ENCODE measurements at regions of chr19 and their contacts with region 1.

Region 1: DNA sequence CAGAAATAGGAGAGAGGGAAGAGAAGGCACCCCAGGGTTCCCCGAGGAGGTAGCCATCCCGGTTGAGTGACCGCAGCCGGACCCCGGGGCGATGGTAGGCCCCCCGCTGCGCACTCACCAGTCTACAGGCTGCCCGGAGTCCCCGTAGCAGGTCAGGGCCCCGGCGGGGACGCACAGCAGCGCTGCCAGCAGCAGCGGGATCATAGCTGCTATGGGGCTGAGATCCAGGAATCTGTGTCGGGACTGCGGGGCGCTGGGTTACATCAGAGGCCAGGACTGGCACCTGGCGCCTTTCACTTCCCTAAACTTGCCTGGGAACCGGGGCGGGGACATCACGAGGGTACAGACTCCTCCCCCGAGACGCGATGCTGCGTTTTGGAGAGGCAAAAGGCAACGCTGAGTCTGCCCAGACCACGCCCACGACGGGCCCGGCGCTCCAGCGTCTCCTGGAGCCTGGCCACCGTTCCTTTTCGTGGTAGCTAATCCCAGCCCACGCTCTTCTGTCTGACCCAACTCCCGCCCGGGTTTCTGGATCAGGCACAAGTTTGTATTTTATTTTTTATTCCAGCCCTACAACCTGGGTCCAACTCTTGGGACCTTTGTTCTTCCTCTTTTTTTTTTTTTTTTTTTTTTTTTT is at the start of gene DNASE2:
- DNase-seq: peak; percentile 95
- ATAC-seq: peak; percentile 79
- H3K4me3 Mint-ChIP-seq: peak within 1 kb of the TSS; percentile 81
- H3K27ac Mint-ChIP-seq: peak within 1 kb of the TSS; percentile 87
- H3K4me1 Mint-ChIP-seq: peaks cover 33% of the 10 kb centered on the region
- H3K27me3 Mint-ChIP-seq: no peaks in the 10 kb centered on the region
- total RNA-seq, gene DNASE2: 26.1 to 27.4 TPM

Region 2: DNA sequence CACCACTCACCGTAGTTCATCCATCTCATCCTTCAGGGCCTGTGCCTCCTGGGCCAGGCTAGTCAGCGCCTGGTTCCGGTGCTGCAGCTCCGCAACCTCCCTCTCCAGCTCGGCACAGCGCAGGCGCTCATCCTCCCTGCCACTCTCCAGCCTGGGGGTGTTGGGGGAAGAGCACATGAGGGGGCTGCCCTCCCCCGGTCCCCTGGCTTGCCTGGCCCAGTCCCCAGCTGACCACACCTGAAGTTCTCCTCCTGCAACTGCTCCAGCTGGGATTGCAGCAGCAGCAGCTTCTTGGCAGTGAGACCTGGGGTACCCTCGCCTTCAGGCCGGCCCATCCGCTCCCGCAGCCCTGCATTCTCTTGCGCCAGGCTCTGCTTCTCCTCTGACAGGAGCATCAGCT is 110.4 kb before region 1 on chr19:
- CTCF ChIA-PET with region 1: no interaction called
- POLR2A ChIA-PET with region 1: no interaction called
- DNase-seq: no peak
- ATAC-seq: no peak
- H3K4me3 Mint-ChIP-seq: no peak overlapping the region
- H3K27ac Mint-ChIP-seq: no peak overlapping the region
- H3K4me1 Mint-ChIP-seq: peaks cover 24% of the 10 kb centered on the region
- H3K27me3 Mint-ChIP-seq: no peaks in the 10 kb centered on the region

Region 3: DNA sequence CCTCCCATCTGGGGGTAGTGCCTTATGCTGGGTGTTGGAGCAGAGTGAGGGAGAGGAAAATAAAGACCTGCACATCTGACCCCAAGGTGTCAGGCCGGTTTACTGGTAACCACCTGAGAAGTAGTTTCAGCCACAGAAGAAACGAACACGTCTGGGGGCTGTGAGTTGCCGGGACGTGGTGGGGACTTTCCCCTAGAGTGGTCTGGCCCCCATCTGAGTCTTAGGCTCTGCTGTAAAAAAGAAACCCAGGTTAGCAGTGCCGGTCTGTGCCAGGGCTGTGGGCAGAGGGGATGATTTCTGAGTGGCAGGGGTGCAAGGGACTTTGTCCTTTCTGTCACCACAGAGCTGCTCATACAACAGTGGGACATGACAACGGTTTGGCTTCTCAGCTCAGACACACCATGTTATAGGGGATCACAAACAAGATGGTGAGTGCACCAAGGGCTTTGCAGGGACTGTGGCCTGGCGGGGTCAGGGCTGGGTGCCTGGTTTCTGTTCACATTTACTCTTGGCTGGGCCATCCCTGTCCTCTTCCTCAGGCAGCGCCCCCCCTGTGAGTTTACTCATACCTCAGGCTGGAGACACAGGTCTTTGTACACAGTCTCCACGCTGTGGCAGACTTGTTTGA is 18.7 kb after region 1 on chr19:
- CTCF ChIA-PET with region 1: interaction called, 37 read pairs
- POLR2A ChIA-PET with region 1: interaction called, 6 read pairs
- DNase-seq: peak; percentile 41
- ATAC-seq: peak; percentile 72
- H3K4me3 Mint-ChIP-seq: no peak overlapping the region
- H3K27ac Mint-ChIP-seq: peak overlapping the region; percentile 64
- H3K4me1 Mint-ChIP-seq: peaks cover 22% of the 10 kb centered on the region
- H3K27me3 Mint-ChIP-seq: no peaks in the 10 kb centered on the region

Region 4: DNA sequence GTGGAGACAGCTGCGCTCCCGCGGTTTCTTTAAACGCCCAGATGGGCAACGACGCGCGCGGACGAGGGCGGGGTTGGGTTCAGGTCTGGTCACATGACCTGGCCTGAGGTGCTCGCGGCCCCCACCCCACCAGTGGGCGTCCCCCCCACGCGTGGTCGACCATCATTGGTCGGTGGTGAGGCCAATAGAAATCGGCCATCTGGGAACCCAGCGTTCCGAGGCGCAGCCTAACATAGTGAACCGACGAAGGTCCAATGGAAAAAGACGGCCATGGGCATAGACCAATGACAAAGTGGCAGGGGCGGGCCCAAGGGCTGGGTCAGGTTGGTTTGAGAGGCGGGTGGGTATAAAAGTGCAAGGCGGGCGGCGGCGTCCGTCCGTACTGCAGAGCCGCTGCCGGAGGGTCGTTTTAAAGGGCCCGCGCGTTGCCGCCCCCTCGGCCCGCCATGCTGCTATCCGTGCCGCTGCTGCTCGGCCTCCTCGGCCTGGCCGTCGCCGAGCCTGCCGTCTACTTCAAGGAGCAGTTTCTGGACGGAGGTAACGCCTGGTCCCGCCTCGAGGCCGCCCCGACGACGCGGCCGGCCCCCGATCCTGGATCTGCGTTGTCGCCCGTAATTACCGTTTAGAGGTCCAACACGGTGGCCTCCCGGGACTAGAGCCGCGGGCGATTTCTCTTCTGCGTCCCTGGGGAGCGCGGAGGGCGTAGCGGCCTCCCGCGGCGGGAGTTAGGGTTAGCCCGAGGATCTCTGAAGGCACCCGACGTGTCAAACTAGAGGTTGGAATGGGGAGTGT is 57.1 kb after region 1 on chr19 and contains the start of gene CALR:
- CTCF ChIA-PET with region 1: interaction called, 27 read pairs
- POLR2A ChIA-PET with region 1: interaction called, 8 read pairs
- DNase-seq: peak; percentile 100
- ATAC-seq: peak; percentile 91
- H3K4me3 Mint-ChIP-seq: peak within 1 kb of the TSS; percentile 99
- H3K27ac Mint-ChIP-seq: peak within 1 kb of the TSS; percentile 97
- H3K4me1 Mint-ChIP-seq: peaks cover 63% of the 10 kb centered on the region
- H3K27me3 Mint-ChIP-seq: no peaks in the 10 kb centered on the region
- total RNA-seq, gene CALR: 875 to 886 TPM

Region 5: DNA sequence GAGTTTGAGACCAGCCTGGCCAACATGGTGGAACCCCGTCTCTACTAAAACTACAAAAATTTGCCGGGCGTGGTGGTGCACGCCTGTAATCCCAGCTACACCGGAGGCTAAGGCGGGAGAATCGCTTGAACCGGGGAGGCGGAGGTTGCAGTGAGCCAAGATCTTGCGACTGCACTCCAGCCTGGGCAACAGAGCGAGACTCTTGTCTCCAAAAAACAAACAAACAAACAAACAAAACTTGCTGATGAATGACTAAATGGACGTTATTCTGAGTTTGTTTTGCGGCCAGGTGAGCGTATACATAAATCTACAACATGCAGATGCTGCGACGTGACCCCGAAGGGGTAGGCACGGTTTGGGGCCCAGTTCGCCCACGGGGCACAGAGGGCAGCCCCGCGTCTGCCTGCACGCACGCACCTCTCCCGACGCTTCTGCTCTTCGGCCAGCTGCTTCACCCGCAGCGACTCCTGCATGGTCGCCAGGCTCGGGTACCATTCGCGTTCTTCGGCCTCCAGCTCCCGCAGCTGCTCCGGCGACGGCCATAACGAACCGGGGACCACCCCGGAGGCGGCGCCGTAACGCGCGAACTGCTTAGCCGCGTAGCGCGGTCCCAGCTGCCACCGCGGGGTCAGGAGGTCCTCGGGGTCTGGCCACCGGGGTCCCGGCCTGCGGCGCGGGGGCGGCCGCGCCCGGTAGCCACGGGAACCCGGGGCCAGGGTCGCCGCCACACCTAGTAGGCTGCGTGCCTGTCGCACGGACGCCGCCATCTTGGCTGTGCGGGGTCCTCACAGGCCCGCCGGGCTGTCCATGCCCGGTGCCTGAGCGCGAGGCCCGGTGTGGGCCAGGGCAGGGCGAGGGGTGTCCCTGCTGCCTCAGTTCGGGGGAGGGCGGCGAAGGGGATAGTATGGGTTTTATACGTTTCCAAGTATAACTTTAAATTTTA is 75.4 kb after region 1 on chr19 and contains the start of gene GADD45GIP1:
- CTCF ChIA-PET with region 1: interaction called, 11 read pairs
- POLR2A ChIA-PET with region 1: no interaction called
- DNase-seq: peak; percentile 86
- ATAC-seq: peak; percentile 96
- H3K4me3 Mint-ChIP-seq: peak within 1 kb of the TSS; percentile 88
- H3K27ac Mint-ChIP-seq: peak within 1 kb of the TSS; percentile 96
- H3K4me1 Mint-ChIP-seq: peaks cover 42% of the 10 kb centered on the region
- H3K27me3 Mint-ChIP-seq: no peaks in the 10 kb centered on the region
- total RNA-seq, gene GADD45GIP1: 23.4 to 25.4 TPM

Measured in activated CD8-positive, alpha-beta T cell treated with anti-CD3 and anti-CD28 coated beads, Interleukin-2, amount 10 ng/mL, durations not matched to agents 7 days and 5 days (primary cell).